ENCODE measurements at regions of chr13 and their contacts with region 1.

Region 1: GRCh38 chr13:75549262-75550158 is at the start of gene UCHL3:
- DNase-seq: peak; percentile 97 to 99
- ATAC-seq: peak; percentile 92 to 98 (median 92)
- H3K4me3 ChIP-seq: peak within 1 kb of the TSS; percentile 92
- H3K4me3 Mint-ChIP-seq: peak within 1 kb of the TSS; percentile 96
- H3K27ac ChIP-seq: peak within 1 kb of the TSS; percentile 87
- H3K27ac Mint-ChIP-seq: peak within 1 kb of the TSS; percentile 92 to 93
- H3K4me1 ChIP-seq: peaks cover 11% of the 10 kb centered on the region
- H3K4me1 Mint-ChIP-seq: peaks cover 41 to 46% of the 10 kb centered on the region in 2 donors
- H3K27me3 ChIP-seq: no peaks in the 10 kb centered on the region
- H3K27me3 Mint-ChIP-seq: no peaks in the 10 kb centered on the region
- CTCF ChIP-seq: peak; percentile 86
- total RNA-seq, gene UCHL3: 19.3 to 23.1 (median 22.7) TPM

Region 2: DNA sequence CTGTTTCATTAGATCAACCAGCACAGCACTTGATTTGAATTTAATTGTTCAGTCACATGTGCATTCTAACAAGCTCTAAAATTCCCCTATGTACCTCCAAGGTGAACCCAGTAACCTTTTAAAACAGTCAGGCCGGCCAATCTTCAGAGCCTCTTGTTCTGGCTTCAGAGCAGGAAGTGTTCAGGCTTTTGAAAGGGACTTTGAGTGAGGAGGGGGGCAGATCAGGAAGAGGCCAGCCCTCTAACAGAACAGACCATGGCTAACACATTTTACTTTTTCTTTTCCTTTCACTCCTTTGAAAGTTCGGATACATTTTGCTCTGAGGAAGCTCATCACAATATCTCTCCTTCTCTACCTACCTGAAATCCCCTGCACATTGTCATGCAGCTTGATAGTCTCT is 457.8 kb before region 1 on chr13:
- intact Hi-C with region 1: no loop called
- DNase-seq: no peak
- ATAC-seq: peak in 1 of 3 donors; percentile 32
- H3K4me3 ChIP-seq: no peak overlapping the region
- H3K4me3 Mint-ChIP-seq: no peak overlapping the region
- H3K27ac ChIP-seq: no peak overlapping the region
- H3K27ac Mint-ChIP-seq: no peak overlapping the region
- H3K4me1 ChIP-seq: no peaks in the 10 kb centered on the region
- H3K4me1 Mint-ChIP-seq: no peaks in the 10 kb centered on the region
- H3K27me3 ChIP-seq: no peaks in the 10 kb centered on the region
- H3K27me3 Mint-ChIP-seq: peaks cover 0 to 4% of the 10 kb centered on the region in 2 donors
- CTCF ChIP-seq: no peak

Region 3: DNA sequence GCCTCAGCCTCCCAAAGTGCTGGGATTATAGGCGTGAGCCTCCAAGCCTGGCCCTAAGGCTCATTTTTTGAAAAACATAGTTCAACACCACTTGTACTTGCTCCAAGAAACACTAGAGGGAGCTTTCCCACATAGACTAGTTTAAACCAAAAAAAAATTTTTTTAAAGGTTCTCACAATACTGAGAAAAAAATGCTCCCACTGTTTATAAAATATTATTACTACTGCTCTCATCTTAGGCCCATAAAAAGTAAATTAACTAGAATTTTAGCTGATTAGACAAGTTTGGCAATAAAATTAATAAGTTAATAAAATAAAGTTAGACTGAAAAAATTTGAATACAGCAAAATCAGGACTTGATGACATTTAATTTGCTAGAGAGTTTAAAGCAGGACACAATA is 177.0 kb before region 1 on chr13:
- intact Hi-C with region 1: loop called (anchors 1 kb)
- DNase-seq: peak in 1 of 2 donors; percentile 62
- ATAC-seq: peak; percentile 75 to 88 (median 80)
- H3K4me3 ChIP-seq: no peak overlapping the region
- H3K4me3 Mint-ChIP-seq: no peak overlapping the region
- H3K27ac ChIP-seq: no peak overlapping the region
- H3K27ac Mint-ChIP-seq: no peak overlapping the region
- H3K4me1 ChIP-seq: no peaks in the 10 kb centered on the region
- H3K4me1 Mint-ChIP-seq: no peaks in the 10 kb centered on the region
- H3K27me3 ChIP-seq: no peaks in the 10 kb centered on the region
- H3K27me3 Mint-ChIP-seq: no peaks in the 10 kb centered on the region
- CTCF ChIP-seq: peak; percentile 64

Region 4: DNA sequence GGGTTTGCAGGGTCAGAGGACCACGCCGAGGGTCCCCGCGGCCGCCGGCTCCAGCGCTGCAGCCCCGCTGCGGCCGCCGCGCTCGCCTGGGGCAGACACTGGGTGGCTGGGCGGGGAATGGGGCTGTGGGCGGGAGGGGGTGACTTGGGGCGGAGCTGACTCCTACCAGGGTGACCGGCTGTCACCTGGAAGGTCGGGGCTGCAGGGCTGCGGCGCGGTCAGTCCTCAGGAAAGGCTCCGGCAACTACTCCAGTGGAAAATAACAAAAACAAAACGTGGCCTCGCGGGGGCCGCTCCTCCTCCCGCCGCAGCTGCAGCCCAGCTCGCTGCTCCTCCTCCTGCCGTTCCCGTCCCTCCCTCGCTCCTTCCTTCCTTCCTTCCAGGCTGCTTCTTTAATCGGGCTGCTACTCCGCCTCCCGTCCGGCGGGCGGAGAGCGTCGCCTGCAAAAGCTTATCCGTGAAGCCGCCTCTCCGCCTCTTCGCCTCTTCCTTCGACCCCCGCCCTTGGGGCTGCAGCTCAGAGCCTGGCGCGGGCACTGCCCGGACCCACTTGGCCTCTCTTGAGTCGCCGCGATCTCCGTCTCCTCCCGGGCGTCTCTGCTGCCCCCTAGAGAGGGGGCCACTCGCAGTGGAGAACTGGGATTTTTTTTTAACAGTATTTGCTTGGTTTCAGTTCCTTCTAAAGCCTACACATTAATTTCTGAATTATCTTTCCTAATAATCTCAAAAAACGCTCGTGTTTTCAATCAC is 67.3 kb before region 1 on chr13 and contains the start of gene TBC1D4:
- intact Hi-C with region 1: loop called (anchors 5 kb)
- DNase-seq: peak; percentile 42 to 66
- ATAC-seq: peak; percentile 80 to 86 (median 81)
- H3K4me3 ChIP-seq: peak within 1 kb of the TSS; percentile 56
- H3K4me3 Mint-ChIP-seq: peak within 1 kb of the TSS; percentile 99
- H3K27ac ChIP-seq: no peak within 1 kb of the TSS
- H3K27ac Mint-ChIP-seq: peak within 1 kb of the TSS; percentile 12 to 82
- H3K4me1 ChIP-seq: peaks cover 23% of the 10 kb centered on the region
- H3K4me1 Mint-ChIP-seq: peaks cover 30% of the 10 kb centered on the region in 2 donors
- H3K27me3 ChIP-seq: peaks cover 16% of the 10 kb centered on the region
- H3K27me3 Mint-ChIP-seq: peaks cover 27 to 32% of the 10 kb centered on the region in 2 donors
- CTCF ChIP-seq: peak; percentile 62
- total RNA-seq, gene TBC1D4: 0.54 to 5.1 (median 3.7) TPM

Region 5: GRCh38 chr13:75489502-75490263 is 59.8 kb before region 1 on chr13:
- intact Hi-C with region 1: loop called (anchors 2 kb)
- DNase-seq: peak in 1 of 2 donors; percentile 15
- ATAC-seq: peak; percentile 86 to 87 (median 87)
- H3K4me3 ChIP-seq: no peak overlapping the region
- H3K4me3 Mint-ChIP-seq: peak overlapping the region; percentile 81
- H3K27ac ChIP-seq: peak overlapping the region; percentile 4
- H3K27ac Mint-ChIP-seq: peak overlapping the region; percentile 83 to 84
- H3K4me1 ChIP-seq: peaks cover 23% of the 10 kb centered on the region
- H3K4me1 Mint-ChIP-seq: peaks cover 27 to 35% of the 10 kb centered on the region in 2 donors
- H3K27me3 ChIP-seq: no peaks in the 10 kb centered on the region
- H3K27me3 Mint-ChIP-seq: peaks cover 0 to 6% of the 10 kb centered on the region in 2 donors
- CTCF ChIP-seq: no peak

Region 6: DNA sequence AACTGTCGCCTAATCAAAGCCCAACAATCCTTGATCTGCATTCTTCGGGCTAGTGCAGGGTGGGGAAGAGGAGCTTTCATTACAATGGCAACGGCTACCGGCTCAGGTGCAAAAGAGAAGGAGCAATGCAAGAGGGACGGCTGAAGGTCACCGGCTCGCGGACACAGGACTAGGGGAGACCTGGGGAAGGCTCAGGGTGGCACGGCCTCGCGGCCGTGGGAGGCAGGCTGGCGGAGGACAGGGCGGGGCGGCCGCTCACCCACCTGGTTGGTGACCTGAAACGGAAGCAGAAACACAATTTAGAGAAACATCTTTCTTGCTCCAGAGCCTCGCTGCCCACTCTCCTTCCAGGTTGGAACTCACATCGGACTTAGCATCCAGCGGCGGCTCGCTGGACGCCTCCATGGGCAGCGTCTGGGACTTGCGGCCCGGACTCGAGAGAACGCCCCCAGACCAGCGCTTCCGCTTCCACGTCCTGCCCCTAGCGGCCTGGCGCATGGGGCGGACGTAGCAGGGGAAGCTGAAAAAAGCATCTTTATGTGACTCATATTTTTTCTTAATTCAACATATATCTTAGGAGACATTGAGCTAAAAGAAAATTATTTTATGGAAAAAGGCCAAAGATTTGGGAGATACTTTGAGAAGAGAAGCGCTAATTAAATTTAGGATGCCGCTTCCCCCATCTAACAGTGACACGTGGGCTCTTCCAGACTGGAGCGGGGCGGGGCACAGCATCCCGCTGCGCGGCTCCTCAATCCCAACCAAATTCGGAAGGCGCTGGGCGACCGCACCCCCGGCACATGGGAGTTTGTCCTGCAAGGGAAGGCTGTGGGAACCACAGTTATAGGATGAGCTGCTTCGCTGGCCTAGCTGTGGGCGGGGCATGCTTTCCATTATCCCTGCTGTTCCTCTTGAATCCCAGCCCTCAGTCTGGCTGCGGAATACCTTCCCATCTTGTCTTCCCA is 11.8 kb before region 1 on chr13 and contains the start of gene COMMD6:
- intact Hi-C with region 1: loop called (anchors 1 kb)
- DNase-seq: peak; percentile 68 to 84
- ATAC-seq: peak; percentile 94 to 95 (median 94)
- H3K4me3 ChIP-seq: peak within 1 kb of the TSS; percentile 90
- H3K4me3 Mint-ChIP-seq: peak within 1 kb of the TSS; percentile 100
- H3K27ac ChIP-seq: peak within 1 kb of the TSS; percentile 48
- H3K27ac Mint-ChIP-seq: peak within 1 kb of the TSS; percentile 90 to 99
- H3K4me1 ChIP-seq: peaks cover 9% of the 10 kb centered on the region
- H3K4me1 Mint-ChIP-seq: peaks cover 42 to 43% of the 10 kb centered on the region in 2 donors
- H3K27me3 ChIP-seq: no peaks in the 10 kb centered on the region
- H3K27me3 Mint-ChIP-seq: peaks cover 0 to 2% of the 10 kb centered on the region in 2 donors
- CTCF ChIP-seq: peak; percentile 30
- total RNA-seq, gene COMMD6: 111 to 149 (median 118) TPM